HepG2 (cell line): ENCODE measurements at regions of chr5 and their contacts with region 1.

Region 1: GRCh38 chr5:17132444-17133083 is 84.9 kb upstream of the BASP1 start:
- DNase-seq: no peak
- ATAC-seq: no peak
- H3K4me3 ChIP-seq: no peak overlapping the region
- H3K27ac ChIP-seq: no peak overlapping the region
- H3K4me1 ChIP-seq: no peaks in the 10 kb centered on the region
- H3K27me3 ChIP-seq: 0 out of 5 replicates have a peak, but pooled peaks cover 0 to 4% of the 10 kb centered on the region in 2 experiments
- CTCF ChIP-seq: peak; percentile 46
- EP300 ChIP-seq: no peak
- POLR2A ChIP-seq: no peak
- RAD21 ChIP-seq: no peak

Region 2: GRCh38 chr5:16791036-16791705 is 341.4 kb before region 1 on chr5:
- CTCF ChIA-PET with region 1: interaction called, 23 read pairs
- POLR2A ChIA-PET with region 1: no interaction called
- in situ Hi-C with region 1: no loop called
- intact Hi-C with region 1: loop called (anchors 1 kb)
- DNase-seq: peak; percentile 36
- ATAC-seq: peak; percentile 44; the same call in 1 of the 3 replicates
- H3K4me3 ChIP-seq: no peak overlapping the region
- H3K27ac ChIP-seq: no peak overlapping the region
- H3K4me1 ChIP-seq: peaks cover 11% of the 10 kb centered on the region
- H3K27me3 ChIP-seq: no peaks in the 10 kb centered on the region
- CTCF ChIP-seq: peak; percentile 61
- EP300 ChIP-seq: no peak
- POLR2A ChIP-seq: no peak
- RAD21 ChIP-seq: peak; percentile 56; the same call in 1 of the 2 replicates

Region 3: GRCh38 chr5:16844948-16845347 is 287.6 kb before region 1 on chr5:
- CTCF ChIA-PET with region 1: no interaction called
- POLR2A ChIA-PET with region 1: no interaction called
- in situ Hi-C with region 1: no loop called
- intact Hi-C with region 1: loop called (anchors 2 kb)
- DNase-seq: no peak
- ATAC-seq: no peak
- H3K4me3 ChIP-seq: no peak overlapping the region
- H3K27ac ChIP-seq: no peak overlapping the region
- H3K4me1 ChIP-seq: no peaks in the 10 kb centered on the region
- H3K27me3 ChIP-seq: no peaks in the 10 kb centered on the region
- CTCF ChIP-seq: 0 out of 2 replicates have a peak, but pooled peaks have one; percentile 24
- EP300 ChIP-seq: no peak
- POLR2A ChIP-seq: no peak
- RAD21 ChIP-seq: no peak

Region 4: DNA sequence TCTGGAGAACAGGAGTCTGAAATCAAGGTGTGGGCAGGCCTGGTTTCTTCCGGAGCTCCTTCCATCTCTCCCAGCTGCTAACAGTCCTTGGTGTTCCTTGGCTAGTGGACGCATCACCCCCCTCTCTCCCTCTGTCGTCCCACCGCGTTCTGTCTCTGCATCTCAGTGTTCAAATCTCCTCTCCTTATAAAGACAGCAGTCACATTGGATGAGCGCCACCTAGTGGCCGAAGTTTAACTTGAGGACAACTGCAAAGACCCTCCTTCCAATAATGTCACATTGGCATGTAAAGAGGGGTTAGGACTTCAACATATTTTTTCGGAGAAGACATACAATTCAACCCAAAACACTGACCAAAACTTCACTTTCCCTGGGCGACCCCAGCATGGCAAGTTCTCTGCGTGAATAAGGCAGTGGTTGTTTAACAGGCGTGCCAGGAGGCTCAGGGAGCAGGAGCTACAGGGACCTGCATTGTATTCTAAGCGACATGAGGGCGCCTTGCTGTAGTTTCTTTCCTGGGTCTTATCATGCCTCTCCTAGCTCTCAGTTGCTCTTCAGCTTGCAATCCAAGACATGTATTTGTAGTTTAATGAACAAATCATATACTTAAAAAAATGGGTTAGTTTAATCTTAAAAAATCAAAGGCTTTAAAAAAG is 56.9 kb after region 1 on chr5:
- CTCF ChIA-PET with region 1: no interaction called
- POLR2A ChIA-PET with region 1: no interaction called
- in situ Hi-C with region 1: no loop called
- intact Hi-C with region 1: no loop called
- DNase-seq: peak; percentile 65
- ATAC-seq: peak; percentile 90
- H3K4me3 ChIP-seq: no peak overlapping the region
- H3K27ac ChIP-seq: no peak overlapping the region
- H3K4me1 ChIP-seq: no peaks in the 10 kb centered on the region
- H3K27me3 ChIP-seq: peaks cover 0 to 4% of the 10 kb centered on the region in 2 experiments; a peak in 1 of 5 replicates
- CTCF ChIP-seq: peak; percentile 81
- EP300 ChIP-seq: no peak
- POLR2A ChIP-seq: no peak
- RAD21 ChIP-seq: no peak